Tibial artery (tissue), 4 donors: ENCODE measurements at regions of chr17 and their contacts with region 1.

Region 1: DNA sequence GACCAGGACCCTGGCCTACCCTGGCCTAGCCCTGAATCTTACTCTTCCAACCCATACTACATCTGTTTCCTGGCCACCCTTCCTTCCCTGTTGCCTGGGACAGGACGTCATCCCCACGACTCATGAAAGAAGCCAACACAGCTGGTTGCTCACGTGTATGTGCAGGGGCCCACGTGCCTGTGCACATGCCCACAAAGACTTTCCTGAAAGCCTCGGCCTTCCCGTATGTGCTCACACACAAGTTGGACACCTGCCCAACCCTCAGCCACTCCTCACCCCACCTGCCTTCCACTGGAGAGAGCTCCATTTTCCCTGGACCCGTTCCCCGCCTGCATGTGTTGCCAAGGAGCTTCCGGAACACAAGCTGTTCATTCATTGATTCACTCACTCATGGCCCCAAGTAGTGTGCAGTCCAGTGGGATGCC is 7.0 kb downstream of the PLXDC1 start:
- DNase-seq: peak; percentile 86 to 88
- H3K4me3 ChIP-seq: no peak overlapping the region
- H3K27ac ChIP-seq: peak overlapping the region in 1 of 2 donors; percentile 46
- H3K4me1 ChIP-seq: peaks cover 0 to 6% (median 0%) of the 10 kb centered on the region in 4 donors
- H3K27me3 ChIP-seq: peaks cover 0 to 3% of the 10 kb centered on the region in 2 donors
- CTCF ChIP-seq: no peak

Region 2: GRCh38 chr17:39069114-39069756 is 75.2 kb before region 1 on chr17:
- intact Hi-C with region 1: loop called (anchors 10 kb)
- DNase-seq: no peak
- H3K4me3 ChIP-seq: no peak overlapping the region
- H3K27ac ChIP-seq: no peak overlapping the region
- H3K4me1 ChIP-seq: peaks cover 0 to 1% (median 0%) of the 10 kb centered on the region in 4 donors
- H3K27me3 ChIP-seq: peaks cover 0 to 7% of the 10 kb centered on the region in 2 donors
- CTCF ChIP-seq: peak; percentile 34 to 49